ENCODE measurements at regions of chr11 and their contacts with region 1.

Region 1: GRCh38 chr11:76680518-76681425 is 10.2 kb upstream of the LRRC32 start:
- DNase-seq: peak; percentile 69 to 83 (median 76)
- H3K4me3 ChIP-seq: no peak overlapping the region
- H3K27ac ChIP-seq: no peak overlapping the region
- H3K4me1 ChIP-seq: peaks cover 0 to 5% of the 10 kb centered on the region in 2 donors
- H3K27me3 ChIP-seq: no peaks in the 10 kb centered on the region
- CTCF ChIP-seq: peak; percentile 74 to 86 (median 82)
- POLR2A ChIP-seq: no peak

Region 2: DNA sequence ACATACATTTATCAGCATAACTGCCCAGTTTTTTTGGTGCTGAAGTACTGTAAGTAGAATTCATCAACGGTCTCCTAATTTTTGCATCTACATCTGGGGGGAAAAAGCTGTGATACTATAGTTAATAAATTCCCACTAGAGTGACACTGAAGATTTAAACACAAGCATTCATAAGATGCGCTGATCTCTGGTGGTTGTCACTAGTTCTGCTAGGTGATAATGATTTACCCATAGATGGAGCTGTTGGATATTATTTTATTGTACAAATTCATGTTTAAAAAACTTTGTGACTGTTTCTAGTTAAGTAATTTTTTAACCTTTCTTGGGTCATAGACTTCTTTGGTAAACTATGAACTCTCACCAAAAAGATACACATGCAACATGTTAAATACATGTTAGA is 129.4 kb before region 1 on chr11:
- intact Hi-C with region 1: loop called in 1 of 2 experiments (anchors 10 kb)
- DNase-seq: no peak
- H3K4me3 ChIP-seq: no peak overlapping the region
- H3K27ac ChIP-seq: no peak overlapping the region
- H3K4me1 ChIP-seq: peaks cover 0 to 9% of the 10 kb centered on the region in 2 donors
- H3K27me3 ChIP-seq: no peaks in the 10 kb centered on the region
- CTCF ChIP-seq: peak in 4 of 6 experiments; percentile 28 to 47 (median 34)
- POLR2A ChIP-seq: no peak

Region 3: GRCh38 chr11:76560219-76560618 is 120.6 kb before region 1 on chr11:
- intact Hi-C with region 1: loop called (anchors 5 to 10 kb)
- DNase-seq: peak in 2 of 7 donors; percentile 19 to 22
- H3K4me3 ChIP-seq: no peak overlapping the region
- H3K27ac ChIP-seq: no peak overlapping the region
- H3K4me1 ChIP-seq: no peaks in the 10 kb centered on the region
- H3K27me3 ChIP-seq: no peaks in the 10 kb centered on the region
- CTCF ChIP-seq: no peak
- POLR2A ChIP-seq: no peak

Region 4: DNA sequence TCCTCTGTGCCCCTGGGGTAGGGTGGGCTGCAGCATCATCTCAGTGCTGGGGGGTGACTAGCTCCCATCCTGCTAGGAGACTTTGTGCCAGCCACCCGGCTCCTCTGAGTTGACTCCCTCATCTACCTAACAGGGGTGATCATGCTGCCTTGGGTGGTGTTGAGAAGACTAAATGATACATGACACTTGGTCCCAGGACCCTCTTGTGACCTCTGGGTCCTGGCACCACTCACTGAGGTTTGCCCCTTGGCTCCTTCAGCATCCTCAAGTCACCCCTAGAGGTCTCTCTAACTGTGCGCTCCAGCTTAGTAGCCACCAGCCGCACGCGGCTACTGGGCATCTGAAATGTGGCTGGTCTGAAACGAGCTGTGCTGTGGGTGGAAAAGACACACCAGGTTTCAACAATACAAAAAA is 82.3 kb before region 1 on chr11:
- intact Hi-C with region 1: loop called (anchors 5 to 10 kb)
- DNase-seq: peak in 6 of 7 donors; percentile 52 to 66 (median 63)
- H3K4me3 ChIP-seq: no peak overlapping the region
- H3K27ac ChIP-seq: no peak overlapping the region
- H3K4me1 ChIP-seq: peaks cover 7 to 13% of the 10 kb centered on the region in 2 donors
- H3K27me3 ChIP-seq: no peaks in the 10 kb centered on the region
- CTCF ChIP-seq: peak in 5 of 6 experiments; percentile 39 to 51 (median 47)
- POLR2A ChIP-seq: no peak

Region 5: DNA sequence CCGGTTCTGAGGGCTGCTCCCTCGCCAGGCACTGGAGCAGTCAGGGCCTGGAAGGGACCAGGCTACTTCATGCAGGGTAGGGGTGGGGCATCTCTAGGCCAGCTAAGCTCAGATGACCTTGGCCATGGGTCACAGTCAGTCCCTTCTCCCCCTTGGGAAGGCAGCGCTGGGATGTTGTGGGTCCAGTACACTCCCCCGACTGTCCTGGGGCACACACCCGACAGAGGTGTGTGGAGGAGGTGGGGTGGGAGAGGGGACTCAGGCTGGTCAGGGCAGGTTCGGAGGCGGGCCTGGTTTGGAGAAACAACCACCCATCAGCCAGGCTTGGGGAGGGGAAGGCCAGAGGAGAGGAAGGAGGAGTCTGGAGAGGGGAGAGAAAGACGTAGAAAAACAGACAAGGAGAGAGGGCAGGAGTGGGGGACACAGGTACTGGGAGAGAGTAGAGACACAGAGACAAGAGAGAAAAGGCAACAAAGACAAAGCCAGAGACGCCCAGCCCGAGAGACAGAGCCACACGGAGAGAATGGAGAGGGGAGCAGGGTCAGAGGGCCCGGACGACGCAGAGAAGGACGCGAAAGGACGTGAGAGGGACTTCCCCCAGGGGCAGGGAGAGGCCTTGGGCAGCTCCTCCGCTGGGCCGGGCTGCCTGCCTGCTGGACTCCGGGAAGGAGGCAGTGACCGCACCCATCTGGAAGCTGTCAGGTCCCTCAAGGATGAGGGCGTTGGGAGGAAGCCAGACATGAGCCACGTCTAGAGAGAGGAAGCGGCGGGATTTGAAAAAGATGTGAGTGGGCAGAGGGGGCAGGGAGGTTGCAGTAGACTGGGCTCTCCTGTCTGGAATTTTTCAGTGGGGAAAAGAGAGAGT is 71.8 kb after region 1 on chr11:
- intact Hi-C with region 1: no loop called
- DNase-seq: peak; percentile 80 to 97 (median 93)
- H3K4me3 ChIP-seq: no peak overlapping the region
- H3K27ac ChIP-seq: peak overlapping the region in 4 of 5 donors; percentile 47 to 84 (median 60)
- H3K4me1 ChIP-seq: peaks cover 9 to 14% of the 10 kb centered on the region in 2 donors
- H3K27me3 ChIP-seq: no peaks in the 10 kb centered on the region
- CTCF ChIP-seq: no peak
- POLR2A ChIP-seq: no peak

Measured in adrenal gland (tissue), 19 donors.